PC-9 (cell line): ENCODE measurements at regions of chr16 and their contacts with region 1.

Region 1: DNA sequence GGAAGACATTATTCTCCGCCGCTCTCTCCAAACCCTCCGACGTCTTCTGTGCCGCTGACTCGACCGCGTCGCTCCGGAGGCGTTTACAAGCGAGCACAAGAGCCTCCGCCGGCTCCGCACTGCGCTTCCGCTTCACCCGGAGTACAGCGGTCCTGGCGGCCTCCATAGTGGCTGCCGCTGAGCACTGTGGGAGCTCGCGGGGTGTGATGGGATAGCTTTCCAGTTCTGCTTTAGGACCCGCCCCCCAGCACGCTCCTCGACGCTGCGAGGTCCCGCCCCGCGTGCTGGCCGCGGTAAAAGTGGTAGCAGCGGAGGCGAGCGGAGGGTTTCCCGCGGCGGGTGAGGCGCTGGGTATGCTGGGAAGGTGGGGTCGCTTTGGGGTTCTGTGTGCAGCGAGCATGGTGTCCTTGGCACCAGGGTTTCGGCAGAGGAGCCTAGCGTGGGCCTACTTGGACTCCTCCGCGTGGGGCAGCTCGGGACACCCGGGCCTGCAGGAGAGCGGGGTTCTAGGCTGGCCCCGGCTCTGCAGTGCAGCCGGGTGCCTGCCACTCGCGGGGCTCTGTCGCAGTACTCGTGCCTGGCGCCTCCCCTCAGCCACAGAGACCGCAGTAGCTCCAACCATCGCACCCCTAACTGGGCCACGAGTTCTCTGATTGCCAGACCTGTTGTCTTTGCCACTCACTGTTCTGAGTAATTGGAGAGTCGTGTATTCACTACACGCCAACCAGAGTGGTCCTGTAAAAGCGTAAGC is at the starts of genes PRMT7 and SLC7A6OS:
- DNase-seq: peak; percentile 85 to 87
- H3K4me3 ChIP-seq: peak within 1 kb of the TSS; percentile 89
- H3K27ac ChIP-seq: peak within 1 kb of the TSS; percentile 58
- H3K4me1 ChIP-seq: peaks cover 11% of the 10 kb centered on the region
- H3K27me3 ChIP-seq: no peaks in the 10 kb centered on the region
- CTCF ChIP-seq: peak; percentile 28; the same call in 1 of the 2 replicates
- total RNA-seq, gene PRMT7: 47.5 and 65.7 TPM in 2 replicates
- total RNA-seq, gene SLC7A6OS: 14.2 and 17.2 TPM in 2 replicates

Region 2: GRCh38 chr16:68264128-68265077 is 46.5 kb before region 1 on chr16 and contains the start of gene SLC7A6:
- CTCF ChIA-PET with region 1: interaction called, 6 read pairs
- POLR2A ChIA-PET with region 1: no interaction called
- intact Hi-C with region 1: loop called (anchors 1 kb)
- DNase-seq: peak; percentile 43 to 77
- H3K4me3 ChIP-seq: peak within 1 kb of the TSS; percentile 86
- H3K27ac ChIP-seq: peak within 1 kb of the TSS; percentile 89
- H3K4me1 ChIP-seq: peaks cover 34% of the 10 kb centered on the region
- H3K27me3 ChIP-seq: no peaks in the 10 kb centered on the region
- CTCF ChIP-seq: peak; percentile 76
- total RNA-seq, gene SLC7A6: 28.6 and 44.7 TPM in 2 replicates